SK-MEL-5 (cell line): ENCODE measurements at regions of chr2 and their contacts with region 1.

Region 1: GRCh38 chr2:11203480-11203879 is 48.2 kb downstream of the SLC66A3 start:
- DNase-seq: peak; percentile 38

Region 2: GRCh38 chr2:10971881-10972260 is 231.6 kb before region 1 on chr2:
- in situ Hi-C with region 1: no loop called
- DNase-seq: no peak

Region 3: GRCh38 chr2:11370377-11371091 is 167.1 kb after region 1 on chr2:
- in situ Hi-C with region 1: no loop called
- DNase-seq: no peak

Region 4: GRCh38 chr2:11411768-11412448 is 208.4 kb after region 1 on chr2:
- in situ Hi-C with region 1: loop called (anchors 25 kb)
- DNase-seq: peak; percentile 82

Region 5: DNA sequence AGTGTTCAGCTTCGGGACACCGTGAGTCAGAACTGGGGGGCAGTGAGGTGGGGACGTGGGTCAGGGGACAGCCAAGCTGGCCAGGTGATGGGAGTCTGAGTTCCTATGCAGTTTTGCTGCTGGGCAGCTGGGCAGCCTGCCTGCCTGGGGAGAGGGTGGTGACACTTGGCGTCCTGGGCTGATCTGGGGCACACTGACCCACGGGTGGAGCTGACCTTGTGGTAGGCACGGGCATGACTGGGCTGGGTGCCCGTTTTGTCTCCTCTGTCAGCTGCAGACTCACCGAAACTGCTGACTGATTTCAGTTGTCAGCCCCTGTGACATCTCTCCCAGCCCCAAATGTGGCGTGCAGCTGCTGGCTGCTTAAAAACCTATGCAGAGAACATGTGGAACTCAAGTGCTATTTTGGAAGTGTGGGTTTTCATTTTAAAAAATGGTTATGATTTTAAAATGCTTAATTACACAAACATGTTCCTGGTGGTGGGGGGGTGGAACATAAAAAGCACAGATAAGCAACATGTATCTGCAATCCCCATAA is 295.1 kb after region 1 on chr2:
- in situ Hi-C with region 1: no loop called
- DNase-seq: peak; percentile 70